Thyroid gland (tissue), 4 donors: ENCODE measurements at regions of chr12 and their contacts with region 1.

Region 1: GRCh38 chr12:109099431-109100020 is 2.1 kb downstream of the UNG start:
- DNase-seq: no peak
- H3K4me3 ChIP-seq: peak overlapping the region in 1 of 3 donors; percentile 62
- H3K27ac ChIP-seq: peak overlapping the region in 2 of 3 donors; percentile 73 to 81
- H3K4me1 ChIP-seq: peaks cover 14 to 18% of the 10 kb centered on the region in 2 donors
- H3K27me3 ChIP-seq: no peaks in the 10 kb centered on the region
- CTCF ChIP-seq: no peak
- POLR2A ChIP-seq: no peak

Region 2: DNA sequence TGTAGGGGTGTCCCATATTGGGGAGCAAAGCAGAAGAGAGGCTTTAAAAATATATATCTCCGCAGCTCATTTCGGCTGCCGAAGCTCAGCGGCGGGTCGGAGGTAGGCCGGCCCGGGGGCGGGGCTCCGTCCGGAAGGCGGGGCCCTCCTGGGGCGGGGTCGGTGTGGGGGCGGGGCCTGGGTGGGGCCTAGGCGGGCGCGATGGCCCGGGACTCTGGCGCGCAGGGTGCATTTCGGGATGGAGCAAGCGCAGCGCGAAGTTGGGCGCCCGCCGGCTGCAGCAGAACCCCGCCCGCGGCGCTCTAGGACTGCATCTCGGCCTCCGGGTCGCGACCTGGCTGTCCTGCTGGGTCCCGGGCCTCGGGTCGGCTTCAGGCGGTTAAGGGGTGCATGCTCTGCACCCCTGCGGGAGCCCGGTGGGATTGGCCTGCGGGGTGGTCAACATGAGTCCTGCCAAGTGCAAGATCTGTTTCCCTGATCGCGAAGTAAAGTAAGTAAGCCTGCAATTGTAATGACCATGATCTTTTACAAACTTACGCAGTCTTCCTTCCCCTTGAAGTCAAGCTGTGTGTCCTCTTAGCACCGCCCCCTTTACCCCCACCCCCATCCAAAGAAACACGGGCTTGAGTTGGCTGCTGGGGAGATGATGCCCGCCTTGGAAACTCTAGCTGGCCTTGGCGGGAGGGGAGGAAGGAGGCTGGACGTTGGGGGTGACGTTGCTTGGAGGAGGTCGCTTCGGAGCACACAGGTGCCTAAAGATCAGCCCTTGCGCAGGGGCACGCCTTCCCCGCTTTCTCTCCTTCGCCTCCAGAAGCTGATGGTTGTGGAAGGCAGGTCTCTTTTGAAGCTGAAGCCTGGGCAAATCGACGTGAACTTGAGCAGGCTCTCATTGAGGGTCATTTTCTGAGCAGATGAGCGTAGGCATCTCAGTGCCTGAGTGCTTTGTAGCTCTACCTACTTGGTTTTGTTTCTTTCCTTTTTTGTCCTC is 55.2 kb after region 1 on chr12:
- intact Hi-C with region 1: loop called (anchors 10 kb)
- DNase-seq: peak; percentile 82 to 84
- H3K4me3 ChIP-seq: peak overlapping the region in 2 of 3 donors; percentile 5 to 42
- H3K27ac ChIP-seq: peak overlapping the region; percentile 59 to 92 (median 59)
- H3K4me1 ChIP-seq: peaks cover 7 to 37% of the 10 kb centered on the region in 2 donors
- H3K27me3 ChIP-seq: no peaks in the 10 kb centered on the region
- CTCF ChIP-seq: no peak
- POLR2A ChIP-seq: peak in 1 of 2 donors; percentile 60